ENCODE measurements at regions of chr5 and their contacts with region 1.

Region 1: GRCh38 chr5:43066799-43067741 is 27.0 kb upstream of the ANXA2R start:
- DNase-seq: peak; percentile 93
- ATAC-seq: peak; percentile 60
- H3K4me3 Mint-ChIP-seq: peak overlapping the region; percentile 99
- H3K27ac Mint-ChIP-seq: peak overlapping the region; percentile 99
- H3K4me1 Mint-ChIP-seq: peaks cover 32% of the 10 kb centered on the region
- H3K27me3 Mint-ChIP-seq: no peaks in the 10 kb centered on the region
- CTCF ChIP-seq: no peak

Region 2: GRCh38 chr5:42950440-42951292 is 116.4 kb before region 1 on chr5:
- CTCF ChIA-PET with region 1: interaction called, 4 read pairs
- POLR2A ChIA-PET with region 1: interaction called, 12 read pairs
- intact Hi-C with region 1: loop called (anchors 1 kb)
- DNase-seq: peak; percentile 82
- ATAC-seq: peak; percentile 46
- H3K4me3 Mint-ChIP-seq: peak overlapping the region; percentile 89
- H3K27ac Mint-ChIP-seq: peak overlapping the region; percentile 97
- H3K4me1 Mint-ChIP-seq: peaks cover 19% of the 10 kb centered on the region
- H3K27me3 Mint-ChIP-seq: no peaks in the 10 kb centered on the region
- CTCF ChIP-seq: no peak

Region 3: GRCh38 chr5:43008369-43009153 is 58.5 kb before region 1 on chr5:
- CTCF ChIA-PET with region 1: interaction called, 8 read pairs
- POLR2A ChIA-PET with region 1: interaction called, 40 read pairs
- intact Hi-C with region 1: loop called (anchors 1 kb)
- DNase-seq: peak; percentile 95
- ATAC-seq: peak; percentile 70
- H3K4me3 Mint-ChIP-seq: peak overlapping the region; percentile 93
- H3K27ac Mint-ChIP-seq: peak overlapping the region; percentile 99
- H3K4me1 Mint-ChIP-seq: peaks cover 30% of the 10 kb centered on the region
- H3K27me3 Mint-ChIP-seq: no peaks in the 10 kb centered on the region
- CTCF ChIP-seq: no peak

Region 4: GRCh38 chr5:43040287-43041098 is 26.6 kb before region 1 on chr5 and contains the start of gene ANXA2R:
- CTCF ChIA-PET with region 1: interaction called, 41 read pairs
- POLR2A ChIA-PET with region 1: interaction called, 131 read pairs
- intact Hi-C with region 1: loop called (anchors 1 kb)
- DNase-seq: peak; percentile 97
- ATAC-seq: peak; percentile 67
- H3K4me3 Mint-ChIP-seq: peak within 1 kb of the TSS; percentile 81
- H3K27ac Mint-ChIP-seq: peak within 1 kb of the TSS; percentile 98
- H3K4me1 Mint-ChIP-seq: peaks cover 38% of the 10 kb centered on the region
- H3K27me3 Mint-ChIP-seq: no peaks in the 10 kb centered on the region
- CTCF ChIP-seq: peak; percentile 76
- total RNA-seq, gene ANXA2R: 8.0 to 10.4 TPM

Region 5: DNA sequence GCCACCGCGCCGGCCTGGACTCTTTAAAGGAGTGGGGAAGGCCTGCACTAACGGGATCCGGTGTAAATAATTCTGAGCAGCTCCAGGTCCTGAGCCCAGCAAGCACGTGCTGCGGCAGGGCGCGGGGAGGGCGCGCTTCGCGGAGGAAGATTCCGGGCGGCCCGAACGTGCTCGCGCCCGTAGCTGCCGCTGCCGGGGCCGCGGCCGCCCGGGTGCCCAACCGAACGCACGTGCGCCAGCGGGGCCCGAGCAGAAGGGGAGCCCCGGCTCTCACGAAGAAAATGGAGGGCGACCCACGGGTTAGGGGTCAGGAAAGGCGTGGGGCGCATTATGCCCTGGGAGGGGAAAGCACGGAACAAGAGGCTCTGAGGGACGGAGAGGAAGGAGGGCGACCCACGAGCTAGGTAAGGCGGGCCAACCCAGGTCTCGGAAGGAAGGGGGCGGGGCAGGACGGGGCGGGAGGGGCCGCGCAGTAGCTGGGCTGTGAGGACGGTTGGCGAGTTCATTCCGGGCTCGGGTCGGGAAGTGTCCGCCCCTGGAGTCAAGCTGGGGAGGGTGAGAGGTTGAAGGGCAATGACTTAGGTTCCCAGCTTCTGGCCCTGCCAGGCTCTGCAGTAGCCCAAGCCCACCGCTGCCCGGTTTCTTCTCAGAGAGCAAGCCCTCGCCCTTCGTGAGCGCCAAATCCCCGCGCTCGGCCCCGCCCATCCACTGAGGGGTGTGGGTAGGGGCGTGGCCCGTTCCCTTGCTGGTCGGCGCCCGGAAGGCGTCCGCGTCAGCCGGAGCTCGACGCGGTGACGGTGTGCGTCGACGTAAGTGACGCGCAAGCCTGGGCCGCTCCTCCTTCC is 53.9 kb after region 1 on chr5 and contains the start of gene ZNF131:
- CTCF ChIA-PET with region 1: interaction called, 8 read pairs
- POLR2A ChIA-PET with region 1: interaction called, 10 read pairs
- intact Hi-C with region 1: no loop called
- DNase-seq: peak; percentile 97
- ATAC-seq: peak; percentile 93
- H3K4me3 Mint-ChIP-seq: peak within 1 kb of the TSS; percentile 89
- H3K27ac Mint-ChIP-seq: peak within 1 kb of the TSS; percentile 96
- H3K4me1 Mint-ChIP-seq: peaks cover 32% of the 10 kb centered on the region
- H3K27me3 Mint-ChIP-seq: no peaks in the 10 kb centered on the region
- CTCF ChIP-seq: no peak
- total RNA-seq, gene ZNF131: 34.8 to 36.6 TPM

Region 6: GRCh38 chr5:43484106-43484849 is 417.2 kb after region 1 on chr5:
- CTCF ChIA-PET with region 1: interaction called, 3 read pairs
- POLR2A ChIA-PET with region 1: interaction called, 12 read pairs
- intact Hi-C with region 1: loop called (anchors 10 kb)
- DNase-seq: peak; percentile 93
- ATAC-seq: peak; percentile 71
- H3K4me3 Mint-ChIP-seq: peak overlapping the region; percentile 91
- H3K27ac Mint-ChIP-seq: peak overlapping the region; percentile 100
- H3K4me1 Mint-ChIP-seq: peaks cover 42% of the 10 kb centered on the region
- H3K27me3 Mint-ChIP-seq: no peaks in the 10 kb centered on the region
- CTCF ChIP-seq: peak; percentile 67

Measured in activated CD8-positive, alpha-beta T cell treated with anti-CD3 and anti-CD28 coated beads for 36 hours (primary cell).